ENCODE measurements at regions of chr1 and their contacts with region 1.

Region 1: DNA sequence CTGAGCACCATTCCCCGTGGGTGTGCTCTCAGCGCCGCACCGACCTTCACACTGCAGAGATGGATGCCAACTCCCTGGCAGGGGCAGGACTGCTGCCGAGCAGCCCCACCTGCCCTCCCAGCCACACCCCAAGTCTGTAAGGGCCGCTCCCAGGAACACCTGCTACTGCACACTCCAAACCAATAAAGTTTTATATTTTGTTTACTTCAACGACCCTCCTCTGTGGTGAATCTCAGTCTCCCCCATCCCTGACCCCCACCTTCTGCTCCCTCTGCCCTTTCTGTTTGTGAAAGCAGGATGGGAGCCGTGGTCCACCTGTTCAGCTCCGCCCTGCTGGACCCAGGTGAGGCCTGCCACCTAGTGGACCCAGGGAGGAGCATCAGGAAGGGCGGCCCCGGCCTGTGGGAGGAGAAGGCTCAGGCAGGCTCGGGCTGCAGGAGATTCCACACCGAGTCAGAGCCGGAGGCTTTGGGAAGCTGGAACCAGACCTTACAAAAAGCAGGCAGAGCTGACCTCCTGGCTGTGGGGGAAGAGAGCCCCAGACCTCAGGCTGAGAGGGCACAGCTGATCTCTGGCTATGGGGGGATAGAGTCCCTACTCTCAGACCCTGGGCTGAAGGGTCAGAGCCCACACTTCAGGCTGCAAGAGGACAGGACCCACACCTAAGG is 982 bp upstream of the TMEM82 start:
- DNase-seq: no peak
- H3K4me3 ChIP-seq: no peak overlapping the region
- H3K27me3 ChIP-seq: no peaks in the 10 kb centered on the region
- CTCF ChIP-seq: peak; percentile 90

Region 2: DNA sequence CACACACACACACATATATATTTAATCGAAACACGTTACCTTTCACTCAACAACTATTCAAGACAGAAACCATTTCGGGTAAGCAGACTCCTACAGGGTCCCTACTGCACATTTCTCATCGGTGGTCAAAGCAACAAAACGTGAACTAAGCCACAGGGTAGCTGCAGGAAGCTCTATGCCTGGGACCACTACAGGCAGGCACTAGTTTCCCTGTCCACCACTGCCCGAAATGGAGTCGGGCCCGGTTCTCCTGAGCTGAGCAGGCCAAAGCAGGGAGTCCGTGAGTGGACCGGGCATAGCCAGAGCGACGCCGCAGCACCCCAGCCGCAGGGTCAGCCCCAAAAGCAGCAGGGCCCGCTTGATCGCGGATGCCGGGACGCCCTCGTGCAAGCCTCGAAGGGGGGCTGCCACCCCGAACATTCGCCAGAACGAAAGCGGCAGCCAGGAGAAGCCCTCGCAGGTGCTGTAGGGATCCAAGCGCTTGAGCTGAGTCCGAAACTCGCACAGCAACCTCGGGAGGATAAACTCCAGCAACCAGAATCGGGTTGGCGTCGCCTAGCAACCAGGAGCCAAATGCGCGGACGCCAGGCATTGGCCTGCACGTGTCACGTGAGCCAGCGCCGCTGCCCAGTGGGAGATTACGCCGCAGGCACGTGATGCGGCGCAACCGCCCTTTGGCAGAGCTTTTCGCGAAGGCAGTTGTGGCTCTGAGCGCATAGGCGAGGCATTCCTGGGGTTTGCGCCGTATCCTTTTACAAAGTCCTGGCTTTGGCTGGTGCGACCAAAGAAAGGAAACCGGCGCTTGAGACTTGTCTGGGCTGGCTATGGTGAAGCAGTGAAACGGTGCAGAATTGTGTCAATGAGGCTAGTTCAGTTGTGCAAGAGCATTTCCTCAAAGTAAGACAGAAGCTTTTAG is 138.0 kb before region 1 on chr1:
- CTCF ChIA-PET with region 1: interaction called, 104 read pairs
- POLR2A ChIA-PET with region 1: no interaction called
- DNase-seq: peak; percentile 75
- H3K4me3 ChIP-seq: peak overlapping the region; percentile 70
- H3K27me3 ChIP-seq: no peaks in the 10 kb centered on the region
- CTCF ChIP-seq: no peak

Region 3: GRCh38 chr1:15714406-15715136 is 26.7 kb before region 1 on chr1:
- CTCF ChIA-PET with region 1: interaction called, 10 read pairs
- POLR2A ChIA-PET with region 1: interaction called, 3 read pairs
- DNase-seq: peak; percentile 15
- H3K4me3 ChIP-seq: no peak overlapping the region
- H3K27me3 ChIP-seq: no peaks in the 10 kb centered on the region
- CTCF ChIP-seq: no peak

Region 4: DNA sequence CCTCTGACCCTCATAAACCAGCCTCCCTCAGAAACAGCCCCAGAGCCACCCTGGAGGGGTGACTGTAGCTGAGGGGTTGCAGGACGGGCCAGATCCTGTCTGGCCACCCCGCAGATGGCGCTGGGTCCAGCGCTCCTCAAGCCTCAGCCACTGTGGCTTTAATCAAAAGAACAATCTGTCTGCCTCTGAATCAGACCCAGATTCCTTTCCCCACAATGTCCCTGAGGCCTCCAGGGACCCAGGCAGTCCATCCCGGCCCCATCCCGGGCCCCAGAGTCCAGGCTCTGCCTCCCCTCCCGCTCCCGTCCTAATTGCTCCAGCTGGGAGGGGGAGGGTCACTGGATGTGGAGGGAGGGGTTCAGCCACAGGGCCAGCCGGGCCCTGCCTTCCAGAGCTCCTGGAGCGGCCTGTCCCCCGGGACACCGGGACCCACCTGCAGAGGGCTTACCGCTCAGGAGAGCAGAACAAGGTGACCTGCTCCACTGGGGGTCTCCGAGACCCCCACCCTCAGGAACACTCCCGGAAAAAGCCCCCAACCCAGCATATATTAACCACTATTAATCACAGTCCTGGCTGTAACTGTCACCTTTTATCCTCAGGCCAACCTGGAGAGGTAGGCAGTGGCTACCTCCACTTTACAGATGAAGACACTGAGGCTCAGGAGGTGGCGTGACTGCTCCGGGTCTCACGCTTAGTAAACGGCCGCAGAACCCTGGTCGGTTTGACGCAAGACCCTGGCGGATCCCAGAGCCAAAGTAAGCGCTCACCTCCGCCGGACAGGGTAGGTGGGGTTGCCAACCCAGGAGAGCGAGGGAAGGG is 16.5 kb after region 1 on chr1:
- CTCF ChIA-PET with region 1: interaction called, 12 read pairs
- POLR2A ChIA-PET with region 1: no interaction called
- DNase-seq: no peak
- H3K4me3 ChIP-seq: peak overlapping the region; percentile 67
- H3K27me3 ChIP-seq: no peaks in the 10 kb centered on the region
- CTCF ChIP-seq: no peak

Measured in BJ (cell line).